Left cardiac atrium (tissue), 4 donors: ENCODE measurements at regions of chr9 and their contacts with region 1.

Region 1: DNA sequence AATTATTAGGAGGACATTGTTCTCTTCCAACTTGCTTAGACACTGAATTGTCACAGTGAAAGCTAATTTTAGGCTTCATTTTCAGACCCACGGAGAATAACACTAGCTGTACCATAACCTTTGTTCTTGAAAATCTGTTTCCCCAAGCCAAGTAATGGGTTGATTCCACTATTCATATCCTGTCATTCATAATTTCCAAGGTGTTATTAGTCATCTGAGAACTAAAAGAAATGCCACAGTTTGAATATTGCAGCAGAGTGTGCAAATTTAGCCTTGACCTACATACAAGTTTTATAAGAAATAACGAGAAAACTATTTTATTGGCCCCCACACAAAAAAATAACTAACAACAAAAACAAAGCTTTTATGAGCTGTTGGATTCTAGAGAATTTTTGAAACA is 148.5 kb upstream of the TYRP1 start:
- DNase-seq: no peak
- ATAC-seq: no peak

Region 2: DNA sequence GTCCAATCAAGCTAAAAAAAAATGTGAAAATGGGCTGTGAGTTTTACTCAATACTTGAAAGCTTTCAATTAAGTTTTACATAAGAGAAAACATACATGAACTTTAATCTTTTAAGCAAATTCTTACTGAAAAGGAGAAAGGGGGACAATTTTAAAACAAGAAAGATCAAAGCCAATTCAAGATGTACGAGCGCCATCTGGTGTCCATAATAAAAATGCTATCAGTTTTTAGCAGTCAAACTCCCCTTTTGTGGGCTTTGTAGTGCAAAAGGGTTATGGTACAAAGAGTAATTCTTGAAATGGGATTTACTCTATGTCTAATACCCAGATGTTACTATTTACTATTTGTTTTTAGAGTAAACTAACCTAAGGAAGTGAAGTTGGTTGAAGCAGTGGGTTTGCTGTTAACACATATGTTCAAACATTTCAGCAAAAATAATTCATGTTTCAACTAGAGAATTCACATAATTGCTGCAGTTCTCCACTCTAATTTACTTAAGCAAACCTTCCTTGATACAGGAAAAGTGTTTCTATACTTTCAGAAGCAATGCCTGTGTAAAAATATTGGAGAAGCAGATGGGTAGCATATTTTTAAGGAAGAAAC is 79.7 kb before region 1 on chr9:
- intact Hi-C with region 1: no loop called
- DNase-seq: no peak
- ATAC-seq: no peak

Region 3: DNA sequence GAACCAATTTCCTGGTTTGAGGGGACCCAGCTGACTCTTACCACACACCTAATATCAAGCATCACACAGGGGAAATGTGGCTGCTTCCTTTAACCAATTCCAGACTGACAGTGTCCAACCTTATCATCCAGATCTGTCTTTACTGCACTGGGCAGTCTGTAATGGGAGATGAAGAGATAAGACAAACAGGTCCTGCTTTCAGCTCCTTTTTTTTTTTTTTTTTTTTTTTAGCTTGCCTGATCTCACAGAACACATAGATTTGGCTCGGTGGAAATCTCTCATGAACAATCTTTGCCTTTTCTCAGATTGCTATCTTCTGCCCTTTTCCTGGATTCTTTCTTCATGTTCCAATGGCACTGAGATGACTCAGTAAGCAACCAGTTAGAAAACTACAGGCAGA is 50.2 kb before region 1 on chr9:
- intact Hi-C with region 1: loop called in 1 of 2 experiments (anchors 5 kb)
- DNase-seq: no peak
- ATAC-seq: no peak

Region 4: GRCh38 chr9:12566404-12567090 is 21.8 kb after region 1 on chr9:
- intact Hi-C with region 1: no loop called
- DNase-seq: no peak
- ATAC-seq: no peak